H1 (cell line): ENCODE measurements at regions of chr3 and their contacts with region 1.

Region 1: GRCh38 chr3:119359476-119360326 is 65.5 kb downstream of the ARHGAP31 start:
- DNase-seq: no peak
- H3K4me3 ChIP-seq: peak overlapping the region in 1 of 4 experiments; percentile 28; a peak in 1 of 8 replicates
- H3K27ac ChIP-seq: peak overlapping the region; percentile 54; the same call in 1 of the 2 replicates
- H3K4me1 ChIP-seq: peaks cover 9 to 27% (median 19%) of the 10 kb centered on the region in 4 experiments
- H3K27me3 ChIP-seq: no peaks in the 10 kb centered on the region
- CTCF ChIP-seq: no peak
- EP300 ChIP-seq: no peak
- POLR2A ChIP-seq: no peak
- RAD21 ChIP-seq: no peak

Region 2: GRCh38 chr3:119343719-119344118 is 16.0 kb before region 1 on chr3:
- CTCF ChIA-PET with region 1: interaction called, 26 read pairs
- POLR2A ChIA-PET with region 1: interaction called, 41 read pairs
- DNase-seq: no peak
- H3K4me3 ChIP-seq: no peak overlapping the region
- H3K27ac ChIP-seq: no peak overlapping the region
- H3K4me1 ChIP-seq: peaks cover 0 to 8% (median 3%) of the 10 kb centered on the region in 4 experiments; a peak in 6 of 7 replicates
- H3K27me3 ChIP-seq: peaks cover 0 to 6% (median 0%) of the 10 kb centered on the region in 4 experiments; a peak in 1 of 7 replicates
- CTCF ChIP-seq: no peak
- EP300 ChIP-seq: no peak
- POLR2A ChIP-seq: no peak
- RAD21 ChIP-seq: no peak; a peak in 1 of 4 replicates